H1 (cell line): ENCODE measurements at regions of chr2 and their contacts with region 1.

Region 1: DNA sequence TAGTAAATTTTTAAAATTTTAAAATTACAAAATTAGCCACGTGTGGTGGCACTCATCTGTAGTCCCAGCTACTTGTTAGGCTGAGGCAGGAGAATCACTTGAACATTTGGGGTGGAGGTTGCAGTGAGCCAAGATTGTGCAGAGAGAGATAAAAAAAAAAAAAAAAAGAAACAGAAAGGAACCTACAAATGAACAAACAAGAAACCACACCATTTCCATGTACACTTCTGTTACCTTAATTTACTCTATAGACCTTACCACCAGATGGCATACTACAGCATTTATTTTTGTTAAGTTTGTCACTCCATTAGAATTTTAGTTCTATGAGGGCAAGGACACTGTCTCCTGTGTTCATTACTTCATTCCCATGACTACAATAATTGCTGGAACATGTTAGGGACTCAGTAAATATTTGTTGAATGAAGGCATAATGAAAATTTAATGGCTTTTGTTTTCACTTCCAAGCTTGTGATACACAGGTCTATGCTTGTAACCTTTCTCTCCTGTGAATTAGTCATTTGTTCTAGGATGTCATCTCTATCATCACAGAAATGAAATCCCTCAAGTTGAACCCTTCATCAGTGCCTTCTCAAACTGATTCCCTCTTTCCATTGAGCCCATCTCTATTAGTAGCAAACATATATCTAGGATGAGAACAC is 76.0 kb downstream of the ARHGAP15 start:
- DNase-seq: no peak
- H3K4me3 ChIP-seq: no peak overlapping the region
- H3K27ac ChIP-seq: no peak overlapping the region
- H3K4me1 ChIP-seq: no peaks in the 10 kb centered on the region
- H3K27me3 ChIP-seq: no peaks in the 10 kb centered on the region
- CTCF ChIP-seq: peak in 2 of 3 experiments; percentile 19 to 36; a peak in 2 of 4 replicates
- EP300 ChIP-seq: no peak
- POLR2A ChIP-seq: no peak
- RAD21 ChIP-seq: peak in 1 of 2 experiments; percentile 31

Region 2: GRCh38 chr2:143217512-143218115 is 12.4 kb after region 1 on chr2:
- CTCF ChIA-PET with region 1: interaction called, 86 read pairs
- POLR2A ChIA-PET with region 1: no interaction called
- DNase-seq: no peak
- H3K4me3 ChIP-seq: no peak overlapping the region
- H3K27ac ChIP-seq: no peak overlapping the region
- H3K4me1 ChIP-seq: no peaks in the 10 kb centered on the region
- H3K27me3 ChIP-seq: no peaks in the 10 kb centered on the region
- CTCF ChIP-seq: no peak
- EP300 ChIP-seq: no peak
- POLR2A ChIP-seq: no peak
- RAD21 ChIP-seq: no peak